Activated T-helper 1 cell treated with anti-CD3 and anti-CD28 coated beads, Interleukin-12 subunit alpha, Interleukin-12 subunit beta, Interleukin-2, Interleukin-4 antibody, amounts not matched to agents 30 ng/mL and 10 ng/mL and 1 ng/mL, durations not matched to agents 14 hours and 24 hours and 36 hours (primary cell): ENCODE measurements at regions of chrX and their contacts with region 1.

Region 1: GRCh38 chrX:47233337-47234113 is 716 bp downstream of the USP11 start:
- DNase-seq: peak; percentile 87
- H3K4me3 Mint-ChIP-seq: peak overlapping the region; percentile 87
- H3K27ac Mint-ChIP-seq: peak overlapping the region; percentile 90
- H3K4me1 Mint-ChIP-seq: peaks cover 19% of the 10 kb centered on the region
- H3K27me3 Mint-ChIP-seq: no peaks in the 10 kb centered on the region

Region 2: DNA sequence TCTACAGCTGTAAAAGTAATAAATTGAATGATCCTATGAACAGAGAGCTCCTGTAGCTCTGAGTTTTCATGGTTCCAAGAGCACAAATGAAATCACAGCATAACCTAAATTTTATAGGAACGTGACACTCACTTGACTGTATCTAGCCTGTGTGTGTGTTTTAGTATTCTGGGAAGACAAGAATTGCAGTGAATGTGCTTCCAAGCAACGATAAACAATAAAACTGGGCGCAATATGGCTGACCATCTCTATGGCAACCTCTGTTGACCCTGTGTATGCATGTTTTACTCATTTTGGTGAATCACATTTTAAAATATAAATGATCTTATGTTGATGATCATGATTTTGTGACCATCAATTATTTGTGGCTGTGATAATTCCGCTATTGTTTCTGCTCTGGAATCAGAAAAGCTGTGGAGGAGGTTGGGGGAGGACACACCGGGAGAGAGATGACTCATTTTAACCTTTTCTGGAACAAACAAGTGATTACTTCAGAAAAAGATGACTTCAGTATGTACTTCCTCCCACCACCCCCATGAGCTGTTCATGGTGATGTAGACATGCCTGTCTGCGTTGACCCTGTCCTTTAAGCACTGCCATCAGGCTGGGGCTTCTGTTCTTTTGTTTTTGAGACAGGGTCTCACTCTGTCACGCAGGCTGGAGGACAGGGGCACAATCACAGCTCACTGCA is 31.1 kb after region 1 on chrX:
- intact Hi-C with region 1: loop called (anchors 1 kb)
- DNase-seq: no peak
- H3K4me3 Mint-ChIP-seq: peak overlapping the region; percentile 28
- H3K27ac Mint-ChIP-seq: peak overlapping the region; percentile 91
- H3K4me1 Mint-ChIP-seq: peaks cover 17% of the 10 kb centered on the region
- H3K27me3 Mint-ChIP-seq: no peaks in the 10 kb centered on the region

Region 3: DNA sequence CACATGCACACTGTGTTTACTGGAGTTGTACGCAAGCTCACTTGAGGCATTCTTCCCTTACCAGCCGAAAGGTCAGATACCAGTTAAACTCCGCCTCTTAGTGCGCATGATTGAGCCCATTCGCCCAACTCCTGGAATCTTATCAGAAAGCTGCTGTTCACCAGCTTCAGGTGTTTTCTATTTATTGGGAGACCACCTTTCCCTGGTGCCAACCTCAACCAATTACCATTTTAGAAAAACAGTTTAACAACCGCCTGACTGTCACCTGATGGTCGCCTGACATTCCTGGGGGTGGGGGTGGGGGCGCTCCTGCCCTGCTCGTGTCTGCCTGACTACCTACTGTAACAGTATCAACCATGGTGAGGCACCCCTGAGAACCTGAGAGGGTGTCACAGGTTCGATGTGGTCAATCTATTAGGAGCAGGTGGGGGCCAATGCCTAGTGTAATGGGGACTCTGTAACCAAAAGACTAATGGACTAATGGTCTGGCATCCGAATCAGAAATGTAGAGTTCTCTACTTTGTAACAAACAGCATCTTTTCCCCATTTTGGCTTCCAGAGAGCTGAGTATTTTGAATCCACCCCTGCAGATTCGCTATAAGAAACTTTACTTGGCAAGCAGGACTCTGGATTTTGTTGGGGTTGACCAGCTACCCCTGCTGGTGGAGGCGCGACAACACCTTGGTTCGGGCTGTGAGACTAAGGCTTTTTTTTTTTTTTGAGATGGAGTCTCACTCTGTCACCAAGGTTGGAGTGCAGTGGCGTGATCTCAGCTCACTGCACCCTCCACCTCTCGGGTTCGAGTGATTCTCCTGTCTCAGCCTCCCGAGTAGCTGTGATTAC is 78.6 kb after region 1 on chrX:
- intact Hi-C with region 1: loop called (anchors 1 kb)
- DNase-seq: peak; percentile 1
- H3K4me3 Mint-ChIP-seq: no peak overlapping the region
- H3K27ac Mint-ChIP-seq: no peak overlapping the region
- H3K4me1 Mint-ChIP-seq: no peaks in the 10 kb centered on the region
- H3K27me3 Mint-ChIP-seq: no peaks in the 10 kb centered on the region